Stomach (tissue), 19 donors: ENCODE measurements at regions of chr20 and their contacts with region 1.

Region 1: GRCh38 chr20:44388466-44389023 is 33.0 kb downstream of the HNF4A start:
- DNase-seq: peak; percentile 59 to 74
- H3K4me3 ChIP-seq: no peak overlapping the region
- H3K27ac ChIP-seq: no peak overlapping the region
- H3K4me1 ChIP-seq: peaks cover 0 to 19% (median 10%) of the 10 kb centered on the region in 4 donors
- H3K27me3 ChIP-seq: peaks cover 0 to 31% (median 0%) of the 10 kb centered on the region in 3 donors
- CTCF ChIP-seq: peak in 5 of 7 experiments; percentile 37 to 62 (median 54)
- EP300 ChIP-seq: no peak
- POLR2A ChIP-seq: no peak

Region 2: GRCh38 chr20:44180814-44181213 is 207.7 kb before region 1 on chr20:
- intact Hi-C with region 1: no loop called
- DNase-seq: peak in 1 of 2 donors; percentile 84
- H3K4me3 ChIP-seq: peak overlapping the region in 3 of 4 donors; percentile 20 to 44 (median 31)
- H3K27ac ChIP-seq: peak overlapping the region in 4 of 5 donors; percentile 35 to 91 (median 70)
- H3K4me1 ChIP-seq: peaks cover 4 to 30% (median 11%) of the 10 kb centered on the region in 4 donors
- H3K27me3 ChIP-seq: peaks cover 0 to 11% (median 0%) of the 10 kb centered on the region in 3 donors
- CTCF ChIP-seq: no peak
- EP300 ChIP-seq: no peak
- POLR2A ChIP-seq: no peak

Region 3: DNA sequence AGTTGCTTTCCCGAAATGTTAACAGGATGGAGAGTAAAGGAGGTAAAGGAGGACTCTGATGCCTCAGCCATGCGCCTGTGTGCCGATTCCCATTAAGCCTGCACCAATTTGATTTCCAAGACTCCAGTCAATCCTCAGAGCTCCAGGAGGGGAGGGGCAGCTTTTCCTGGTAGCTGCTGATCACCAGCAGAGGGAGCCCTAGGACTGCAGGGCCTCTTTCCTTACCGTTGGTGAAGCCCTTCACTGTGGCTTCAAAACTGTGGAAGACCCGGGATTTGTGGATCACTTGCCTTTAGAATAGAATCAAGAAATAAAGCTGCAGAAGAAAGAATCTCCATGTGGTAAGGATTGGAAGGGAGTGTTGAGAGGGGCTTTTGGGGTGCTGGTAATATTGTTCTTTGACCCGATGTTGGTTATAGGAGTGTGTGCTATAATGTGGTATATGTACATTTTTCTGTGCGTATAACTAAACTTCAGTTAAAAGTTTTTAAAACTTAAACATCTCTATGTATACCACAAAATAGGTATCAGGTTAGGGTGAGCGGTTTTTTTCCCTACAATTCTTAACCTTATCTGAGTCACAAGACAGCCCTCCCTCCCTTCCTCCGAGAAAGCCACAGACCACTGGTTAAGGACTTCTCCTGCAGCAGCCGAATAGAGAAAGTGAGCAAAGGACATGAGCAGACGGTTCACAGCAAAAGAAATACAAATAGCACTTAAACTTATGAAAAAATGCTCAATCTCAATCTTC is 171.0 kb before region 1 on chr20:
- intact Hi-C with region 1: loop called (anchors 5 kb)
- DNase-seq: peak; percentile 81 to 88
- H3K4me3 ChIP-seq: no peak overlapping the region
- H3K27ac ChIP-seq: peak overlapping the region in 1 of 5 donors; percentile 20
- H3K4me1 ChIP-seq: peaks cover 0 to 40% (median 14%) of the 10 kb centered on the region in 4 donors
- H3K27me3 ChIP-seq: no peaks in the 10 kb centered on the region
- CTCF ChIP-seq: peak in 5 of 7 experiments; percentile 75 to 90 (median 86)
- EP300 ChIP-seq: no peak
- POLR2A ChIP-seq: no peak

Region 4: DNA sequence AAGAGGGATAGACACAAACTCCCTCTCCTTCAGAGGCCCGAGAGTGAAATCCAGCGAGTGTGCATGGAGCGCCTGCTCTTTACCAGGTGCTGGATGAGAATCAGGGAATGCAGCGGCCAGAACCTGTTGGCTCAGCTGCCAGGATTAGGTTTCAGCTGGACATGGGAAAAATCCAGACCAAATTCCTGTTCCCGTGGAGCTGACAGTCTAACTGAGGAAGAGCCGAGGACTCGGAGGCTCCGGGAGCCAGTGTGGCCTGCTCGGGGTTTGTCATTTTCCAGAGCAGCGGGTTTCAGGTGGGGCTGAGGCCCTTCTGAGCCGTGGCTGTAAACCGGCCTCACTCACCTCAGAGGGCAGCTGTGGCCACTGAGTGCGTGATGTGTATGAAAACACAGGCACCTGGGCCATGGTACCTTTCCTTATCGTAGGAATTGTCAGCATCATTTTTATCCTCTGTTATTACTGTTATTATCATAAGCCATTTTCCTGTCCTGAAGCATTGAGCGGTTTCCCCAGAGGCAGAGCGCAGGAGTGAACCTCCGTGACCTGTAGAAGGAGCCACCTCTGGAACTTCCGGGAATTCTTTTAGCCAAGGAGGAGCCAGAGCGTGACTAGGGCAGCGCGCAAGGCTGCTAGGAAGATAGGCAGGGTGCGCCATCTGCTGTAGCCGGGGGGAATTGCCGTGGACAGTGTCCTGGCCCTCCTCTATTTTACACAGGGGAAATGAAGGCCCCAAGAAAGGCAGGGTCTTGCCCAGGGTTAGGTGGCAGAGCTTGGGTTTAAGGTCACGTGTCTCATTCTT is 221.2 kb after region 1 on chr20:
- intact Hi-C with region 1: loop called (anchors 10 kb)
- DNase-seq: peak; percentile 91 to 95
- H3K4me3 ChIP-seq: peak overlapping the region; percentile 13 to 33 (median 16)
- H3K27ac ChIP-seq: peak overlapping the region; percentile 47 to 87 (median 83)
- H3K4me1 ChIP-seq: peaks cover 18 to 45% (median 31%) of the 10 kb centered on the region in 4 donors
- H3K27me3 ChIP-seq: no peaks in the 10 kb centered on the region
- CTCF ChIP-seq: peak in 5 of 7 experiments; percentile 96 to 98 (median 97)
- EP300 ChIP-seq: no peak
- POLR2A ChIP-seq: no peak